Heart left ventricle (tissue), 16 donors: ENCODE measurements at regions of chr13 and their contacts with region 1.

Region 1: GRCh38 chr13:20525690-20526544 is at the start of gene CRYL1:
- DNase-seq: peak; percentile 83 to 91 (median 86)
- ATAC-seq: peak; percentile 93 to 99 (median 97)
- H3K4me3 ChIP-seq: peak within 1 kb of the TSS; percentile 73 to 99 (median 88)
- H3K27ac ChIP-seq: peak within 1 kb of the TSS; percentile 62 to 98 (median 90)
- H3K4me1 ChIP-seq: peaks cover 0 to 38% (median 13%) of the 10 kb centered on the region in 12 donors
- H3K27me3 ChIP-seq: peaks cover 0 to 1% (median 0%) of the 10 kb centered on the region in 9 donors
- CTCF ChIP-seq: no peak
- POLR2A ChIP-seq: peak in 1 of 2 donors; percentile 80
- total RNA-seq, gene CRYL1: 14.9 to 36.5 (median 22.3) TPM

Region 2: GRCh38 chr13:20024702-20025101 is 501.2 kb before region 1 on chr13:
- intact Hi-C with region 1: no loop called
- DNase-seq: no peak
- ATAC-seq: no peak
- H3K4me3 ChIP-seq: no peak overlapping the region
- H3K27ac ChIP-seq: no peak overlapping the region
- H3K4me1 ChIP-seq: peaks cover 0 to 11% (median 2%) of the 10 kb centered on the region in 12 donors
- H3K27me3 ChIP-seq: no peaks in the 10 kb centered on the region
- CTCF ChIP-seq: no peak
- POLR2A ChIP-seq: no peak

Region 3: GRCh38 chr13:20559659-20560356 is 33.9 kb after region 1 on chr13:
- intact Hi-C with region 1: loop called in 3 of 10 experiments (anchors 5 kb)
- DNase-seq: no peak
- ATAC-seq: no peak
- H3K4me3 ChIP-seq: no peak overlapping the region
- H3K27ac ChIP-seq: no peak overlapping the region
- H3K4me1 ChIP-seq: no peaks in the 10 kb centered on the region
- H3K27me3 ChIP-seq: no peaks in the 10 kb centered on the region
- CTCF ChIP-seq: no peak
- POLR2A ChIP-seq: no peak

Region 4: GRCh38 chr13:21014502-21015170 is 488.7 kb after region 1 on chr13:
- intact Hi-C with region 1: no loop called
- DNase-seq: peak in 4 of 5 donors; percentile 49 to 79 (median 67)
- ATAC-seq: peak; percentile 68 to 82 (median 76)
- H3K4me3 ChIP-seq: no peak overlapping the region
- H3K27ac ChIP-seq: peak overlapping the region in 11 of 12 donors; percentile 32 to 71 (median 59)
- H3K4me1 ChIP-seq: peaks cover 12 to 92% (median 73%) of the 10 kb centered on the region in 12 donors
- H3K27me3 ChIP-seq: no peaks in the 10 kb centered on the region
- CTCF ChIP-seq: no peak
- POLR2A ChIP-seq: no peak